MCF 10A (cell line): ENCODE measurements at regions of chr12 and their contacts with region 1.

Region 1: DNA sequence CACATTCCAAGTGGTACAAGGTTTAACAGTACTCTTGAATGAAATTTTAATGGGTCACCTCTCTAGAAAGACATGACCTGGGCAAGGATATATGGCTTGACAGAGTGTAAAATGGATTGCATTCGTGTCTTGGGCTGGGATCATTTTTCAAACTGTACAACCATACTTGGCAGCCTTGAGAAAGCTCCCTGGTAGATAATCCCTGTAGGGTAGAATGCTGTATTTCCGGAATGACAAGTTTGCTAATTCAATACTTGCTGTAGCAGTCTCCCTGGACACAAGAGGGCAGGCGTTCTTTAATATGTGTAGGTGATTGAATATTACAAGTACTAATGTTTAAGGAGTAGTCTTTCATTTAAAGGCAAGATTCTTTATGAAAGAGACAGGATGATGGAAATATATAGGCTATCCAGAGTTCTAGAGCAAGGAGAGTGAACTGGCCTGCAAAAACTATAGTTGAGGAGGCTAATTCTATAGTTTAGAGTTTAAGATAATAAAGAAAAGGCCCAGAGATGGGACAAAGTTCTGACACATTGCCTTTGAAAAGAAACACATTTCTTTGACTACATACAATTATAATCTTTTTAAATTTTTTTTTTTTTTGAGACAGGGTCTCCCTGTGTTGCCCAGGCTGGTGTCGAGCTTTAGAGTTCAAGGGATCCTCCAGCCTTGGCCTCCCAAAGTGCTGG is 53.4 kb downstream of the PLBD1 start:
- DNase-seq: peak; percentile 58
- H3K4me3 Mint-ChIP-seq: no peak overlapping the region
- H3K27ac Mint-ChIP-seq: peak overlapping the region; percentile 47
- H3K4me1 Mint-ChIP-seq: peaks cover 12% of the 10 kb centered on the region
- H3K27me3 Mint-ChIP-seq: no peaks in the 10 kb centered on the region
- CTCF ChIP-seq: peak; percentile 44

Region 2: GRCh38 chr12:14618983-14619382 is 104.7 kb after region 1 on chr12:
- CTCF ChIA-PET with region 1: interaction called, 44 read pairs
- POLR2A ChIA-PET with region 1: no interaction called
- intact Hi-C with region 1: loop called (anchors 1 kb)
- DNase-seq: peak; percentile 48
- H3K4me3 Mint-ChIP-seq: no peak overlapping the region
- H3K27ac Mint-ChIP-seq: no peak overlapping the region
- H3K4me1 Mint-ChIP-seq: peaks cover 8% of the 10 kb centered on the region
- H3K27me3 Mint-ChIP-seq: no peaks in the 10 kb centered on the region
- CTCF ChIP-seq: peak; percentile 33

Region 3: DNA sequence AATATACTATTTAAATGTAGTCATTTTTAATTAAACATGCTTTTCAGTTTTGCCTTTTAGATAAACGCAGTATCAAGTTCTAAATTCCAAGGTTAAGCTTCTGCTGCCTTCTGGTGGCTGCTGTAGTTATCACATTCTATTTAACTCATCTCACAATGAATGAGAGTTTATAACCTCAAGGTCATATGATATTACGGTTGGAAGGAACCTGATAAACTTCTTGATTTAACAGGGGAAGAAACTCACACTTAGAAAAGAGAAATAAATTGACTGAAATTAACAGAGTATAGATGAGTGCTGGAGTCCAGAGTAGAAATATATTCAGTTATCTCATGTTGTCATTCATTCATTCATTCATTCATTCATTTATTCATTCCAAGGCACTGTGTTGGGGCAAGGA is 150.2 kb after region 1 on chr12:
- CTCF ChIA-PET with region 1: interaction called, 7 read pairs
- POLR2A ChIA-PET with region 1: no interaction called
- intact Hi-C with region 1: loop called (anchors 5 kb)
- DNase-seq: peak; percentile 53
- H3K4me3 Mint-ChIP-seq: no peak overlapping the region
- H3K27ac Mint-ChIP-seq: no peak overlapping the region
- H3K4me1 Mint-ChIP-seq: peaks cover 5% of the 10 kb centered on the region
- H3K27me3 Mint-ChIP-seq: no peaks in the 10 kb centered on the region
- CTCF ChIP-seq: peak; percentile 58

Region 4: DNA sequence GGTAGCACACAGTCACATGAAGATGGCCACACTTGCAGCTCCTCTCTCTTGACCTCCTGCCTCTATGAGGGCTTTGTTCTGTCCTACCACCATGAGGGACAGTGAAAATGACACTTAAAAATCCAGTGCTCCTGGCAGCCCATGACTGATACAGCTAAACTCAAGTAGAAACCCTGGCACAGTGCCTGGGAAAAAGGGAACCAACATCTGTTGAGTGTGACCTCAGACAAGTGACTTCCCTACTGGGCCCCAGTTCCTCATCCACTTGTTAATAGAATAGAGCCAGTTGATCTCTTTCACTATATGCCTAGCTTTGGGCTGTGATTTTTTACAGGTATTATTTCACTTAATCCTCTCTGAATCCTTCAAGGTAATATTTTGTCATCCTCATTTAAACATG is 177.3 kb after region 1 on chr12:
- CTCF ChIA-PET with region 1: no interaction called
- POLR2A ChIA-PET with region 1: no interaction called
- intact Hi-C with region 1: no loop called
- DNase-seq: no peak
- H3K4me3 Mint-ChIP-seq: no peak overlapping the region
- H3K27ac Mint-ChIP-seq: no peak overlapping the region
- H3K4me1 Mint-ChIP-seq: no peaks in the 10 kb centered on the region
- H3K27me3 Mint-ChIP-seq: no peaks in the 10 kb centered on the region
- CTCF ChIP-seq: no peak